Esophagus muscularis mucosa (tissue), 4 donors: ENCODE measurements at regions of chr18 and their contacts with region 1.

Region 1: DNA sequence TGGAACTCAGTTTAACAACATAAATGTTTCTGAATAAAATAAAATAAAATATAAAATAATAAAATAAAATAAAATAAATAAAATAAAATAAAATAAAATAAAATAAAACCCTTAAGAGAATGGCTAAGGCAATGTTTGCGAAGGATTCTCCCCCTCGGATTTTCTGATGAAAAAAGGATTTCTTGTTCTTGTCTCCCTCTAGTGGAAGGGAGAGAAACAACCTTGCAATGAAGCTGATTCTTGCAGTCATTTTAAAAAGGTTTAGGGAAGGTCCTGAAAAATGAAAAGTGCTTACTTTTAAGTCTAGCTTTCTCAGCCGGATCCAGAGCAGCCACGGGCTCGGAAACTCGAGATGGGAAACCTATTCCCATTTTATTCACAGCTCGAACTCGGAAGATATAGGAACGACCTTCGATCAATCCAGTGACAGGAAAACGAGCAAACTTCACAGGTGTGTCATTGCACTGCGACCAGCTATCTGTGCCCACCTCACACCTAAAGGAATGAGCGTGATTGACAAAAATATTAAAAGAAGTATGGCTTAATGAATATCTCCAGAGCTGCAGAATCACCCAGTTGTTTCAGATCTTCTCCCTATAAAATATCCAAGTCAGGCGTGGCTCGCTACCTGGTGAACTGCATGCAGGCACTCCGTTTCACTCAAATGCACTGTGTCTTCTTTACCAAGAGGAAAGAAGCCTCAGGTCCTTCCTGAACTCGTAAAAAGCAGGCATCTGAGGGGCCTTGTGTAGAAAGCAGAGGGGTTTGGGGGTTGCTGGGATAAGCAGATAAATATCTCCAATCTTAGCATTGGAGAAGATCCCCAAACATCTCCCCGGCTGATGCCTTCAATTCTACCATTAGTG is 68.1 kb downstream of the MYOM1 start:
- DNase-seq: no peak
- H3K4me3 ChIP-seq: no peak overlapping the region
- H3K27ac ChIP-seq: peak overlapping the region in 1 of 4 donors; percentile 52
- H3K4me1 ChIP-seq: peaks cover 15 to 33% (median 21%) of the 10 kb centered on the region in 4 donors
- H3K27me3 ChIP-seq: no peaks in the 10 kb centered on the region
- CTCF ChIP-seq: peak; percentile 62 to 85 (median 80)
- EP300 ChIP-seq: no peak
- POLR2A ChIP-seq: no peak

Region 2: GRCh38 chr18:3238742-3239141 is 87.1 kb after region 1 on chr18:
- intact Hi-C with region 1: loop called (anchors 5 kb)
- DNase-seq: no peak
- H3K4me3 ChIP-seq: no peak overlapping the region
- H3K27ac ChIP-seq: no peak overlapping the region
- H3K4me1 ChIP-seq: no peaks in the 10 kb centered on the region
- H3K27me3 ChIP-seq: no peaks in the 10 kb centered on the region
- CTCF ChIP-seq: no peak
- EP300 ChIP-seq: no peak
- POLR2A ChIP-seq: no peak

Region 3: DNA sequence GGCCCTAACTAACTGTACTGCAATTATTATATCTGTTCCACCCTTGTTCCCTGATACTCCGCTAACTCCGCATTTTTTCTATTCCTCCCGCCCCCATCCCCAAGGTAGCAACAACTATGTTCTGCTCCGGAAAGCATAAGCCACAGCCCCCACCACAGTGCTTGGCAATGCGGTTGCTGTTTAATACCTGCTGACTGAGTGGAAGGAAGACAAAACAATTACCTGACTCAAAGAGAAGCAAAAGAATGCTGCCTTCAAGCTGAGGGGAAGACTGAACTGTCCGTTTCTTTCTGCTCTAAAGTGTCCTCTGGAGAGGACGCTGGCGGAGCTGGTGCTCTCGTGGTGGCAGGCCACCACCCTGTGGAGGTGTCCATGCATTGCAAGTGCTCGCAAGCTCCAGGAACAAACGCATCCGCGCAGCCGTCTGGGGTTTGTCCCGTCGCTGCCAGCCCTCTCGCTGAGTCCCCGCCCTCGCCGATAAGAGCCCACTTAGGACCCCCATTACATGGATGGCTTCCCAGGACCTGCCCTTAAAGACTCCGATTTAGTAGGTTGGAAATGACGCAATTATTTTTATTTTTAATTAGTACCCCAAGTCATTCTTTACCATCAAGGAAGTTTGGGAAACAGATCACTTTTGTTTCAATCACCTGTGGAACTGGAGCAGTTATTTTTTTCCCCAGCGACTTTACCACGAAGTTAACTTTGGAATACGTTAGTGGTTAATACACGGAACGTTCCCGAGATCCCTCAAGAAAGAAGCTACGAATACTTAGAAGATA is 94.4 kb after region 1 on chr18:
- intact Hi-C with region 1: loop called (anchors 2 kb)
- DNase-seq: peak; percentile 97
- H3K4me3 ChIP-seq: peak overlapping the region; percentile 87 to 98 (median 94)
- H3K27ac ChIP-seq: peak overlapping the region; percentile 99 to 100 (median 99)
- H3K4me1 ChIP-seq: peaks cover 18 to 55% (median 49%) of the 10 kb centered on the region in 4 donors
- H3K27me3 ChIP-seq: no peaks in the 10 kb centered on the region
- CTCF ChIP-seq: peak; percentile 95 to 99 (median 95)
- EP300 ChIP-seq: no peak
- POLR2A ChIP-seq: no peak